ENCODE measurements at regions of chr12 and their contacts with region 1.

Region 1: GRCh38 chr12:105659355-105660075 is 329.0 kb downstream of the C12orf75 start:
- DNase-seq: no peak
- H3K4me3 ChIP-seq: no peak overlapping the region
- H3K4me1 ChIP-seq: no peaks in the 10 kb centered on the region
- H3K27me3 ChIP-seq: no peaks in the 10 kb centered on the region

Region 2: DNA sequence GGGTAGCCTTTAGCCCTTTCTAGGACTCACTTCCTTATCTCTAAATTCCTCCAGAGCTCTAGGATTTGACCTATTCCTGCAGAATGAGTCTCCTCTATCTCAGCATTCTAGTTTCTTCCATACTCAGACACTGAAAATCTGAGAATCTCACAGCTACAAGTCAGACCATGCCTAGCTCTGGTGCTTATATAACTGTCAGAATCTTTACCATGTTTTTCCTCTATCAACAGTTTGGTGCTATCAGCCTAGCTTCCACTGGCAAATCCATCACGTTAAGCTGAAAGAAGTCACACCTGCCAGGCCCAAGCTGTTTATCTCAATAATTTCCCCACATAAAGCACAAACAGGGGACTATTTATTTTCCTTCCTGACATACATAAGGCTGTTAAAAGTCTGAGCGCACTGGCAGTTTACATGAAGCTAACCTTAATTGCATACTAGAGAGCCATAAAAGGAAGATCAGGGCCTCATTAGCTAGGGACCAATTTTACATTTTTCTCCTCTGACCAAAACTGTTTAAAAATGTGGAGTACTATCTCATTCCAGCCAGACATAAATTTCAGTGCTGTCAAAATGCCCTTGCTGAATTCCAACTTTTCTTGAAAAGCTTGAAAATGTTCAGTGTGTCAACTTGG is 58.5 kb before region 1 on chr12:
- in situ Hi-C with region 1: loop called (anchors 5 kb)
- DNase-seq: no peak
- H3K4me3 ChIP-seq: no peak overlapping the region
- H3K4me1 ChIP-seq: peaks cover 4% of the 10 kb centered on the region; the same call in 1 of the 2 replicates
- H3K27me3 ChIP-seq: no peaks in the 10 kb centered on the region

Region 3: DNA sequence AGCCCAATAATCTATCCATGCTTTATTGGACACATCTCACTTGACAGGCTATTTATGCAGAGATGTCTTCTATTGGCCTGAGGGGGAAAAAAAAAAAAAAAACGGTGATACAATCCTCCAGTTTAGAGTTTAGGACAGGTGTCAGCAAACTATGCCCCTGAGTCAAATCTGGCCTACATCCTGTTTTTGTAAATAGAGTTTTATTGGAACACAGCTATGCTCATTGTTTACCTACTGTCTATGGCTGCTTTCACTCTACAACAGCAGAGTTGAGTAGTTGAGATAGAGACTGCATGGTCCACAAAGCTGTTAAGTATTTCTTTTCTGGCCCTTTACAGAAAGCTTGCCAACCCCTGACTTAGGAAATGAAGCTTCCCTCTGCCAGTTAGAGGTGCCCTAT is 74.1 kb after region 1 on chr12:
- in situ Hi-C with region 1: no loop called
- DNase-seq: no peak
- H3K4me3 ChIP-seq: no peak overlapping the region
- H3K4me1 ChIP-seq: peaks cover 10% of the 10 kb centered on the region
- H3K27me3 ChIP-seq: no peaks in the 10 kb centered on the region